Transverse colon (tissue), 4 donors: ENCODE measurements at regions of chr18 and their contacts with region 1.

Region 1: GRCh38 chr18:12271376-12272235 is 17.4 kb downstream of the CIDEA start:
- DNase-seq: peak; percentile 82
- H3K4me3 ChIP-seq: peak overlapping the region; percentile 3 to 58 (median 37)
- H3K27ac ChIP-seq: peak overlapping the region; percentile 70 to 84 (median 74)
- H3K4me1 ChIP-seq: peaks cover 0 to 6% (median 4%) of the 10 kb centered on the region in 4 donors
- H3K27me3 ChIP-seq: no peaks in the 10 kb centered on the region
- CTCF ChIP-seq: peak; percentile 59 to 85 (median 68)
- EP300 ChIP-seq: no peak
- POLR2A ChIP-seq: no peak

Region 2: DNA sequence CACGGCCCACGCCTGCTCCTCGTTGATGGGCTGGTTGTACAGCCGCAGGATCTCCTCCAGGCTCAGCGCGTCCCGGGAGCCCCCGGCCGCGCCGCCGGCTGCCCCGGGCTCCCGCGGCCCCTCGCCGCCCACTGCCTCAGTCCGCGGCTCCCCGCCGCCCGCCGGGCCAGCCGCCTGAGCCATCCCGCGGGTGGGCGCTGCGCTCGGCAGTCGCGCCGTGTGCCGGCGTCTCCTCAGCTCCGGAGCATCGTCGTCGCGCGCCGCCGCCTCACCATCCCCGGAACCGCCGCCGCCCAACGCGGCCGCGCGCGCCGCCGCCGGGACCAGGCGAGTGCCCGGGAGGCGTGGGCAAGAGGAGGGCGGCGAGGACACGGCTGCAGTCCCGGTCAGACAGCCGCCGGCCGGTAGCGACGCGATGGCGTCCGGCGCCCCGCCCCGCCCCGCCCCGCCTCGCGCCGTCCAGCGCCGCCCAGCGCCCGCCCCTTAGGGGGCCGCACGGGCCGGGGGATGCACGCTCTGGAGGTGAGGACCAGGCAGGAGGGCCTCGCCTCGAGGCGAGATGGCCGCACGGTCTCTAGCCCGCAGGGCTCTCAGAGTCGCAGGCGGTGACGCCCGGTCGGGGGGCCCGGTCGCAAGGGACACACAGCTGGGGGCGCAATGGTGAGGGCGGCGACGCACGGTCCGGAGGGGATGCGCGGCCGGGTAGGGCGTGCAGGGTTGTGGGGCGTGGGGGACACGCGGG is 386.2 kb after region 1 on chr18 and contains the start of gene SPIRE1:
- in situ Hi-C with region 1: no loop called
- intact Hi-C with region 1: loop called (anchors 10 kb)
- DNase-seq: peak; percentile 70
- H3K4me3 ChIP-seq: peak within 1 kb of the TSS; percentile 62 to 72 (median 68)
- H3K27ac ChIP-seq: peak within 1 kb of the TSS; percentile 88 to 94 (median 93)
- H3K4me1 ChIP-seq: peaks cover 0 to 22% (median 12%) of the 10 kb centered on the region in 4 donors
- H3K27me3 ChIP-seq: peaks cover 15% of the 10 kb centered on the region
- CTCF ChIP-seq: no peak
- EP300 ChIP-seq: no peak
- POLR2A ChIP-seq: peak; percentile 25
- total RNA-seq, gene SPIRE1: 6.0 to 7.8 (median 6.8) TPM